ENCODE measurements at regions of chr19 and their contacts with region 1.

Region 1: GRCh38 chr19:52853880-52854279 is 3.5 kb downstream of the ZNF468 start:
- DNase-seq: no peak
- ATAC-seq: no peak
- H3K4me3 Mint-ChIP-seq: no peak overlapping the region
- H3K27ac Mint-ChIP-seq: no peak overlapping the region
- H3K4me1 Mint-ChIP-seq: peaks cover 23% of the 10 kb centered on the region
- H3K27me3 Mint-ChIP-seq: no peaks in the 10 kb centered on the region

Region 2: GRCh38 chr19:52786457-52787359 is 67.2 kb before region 1 on chr19 and contains the start of gene ZNF600:
- CTCF ChIA-PET with region 1: no interaction called
- POLR2A ChIA-PET with region 1: no interaction called
- intact Hi-C with region 1: loop called in 1 of 2 experiments (anchors 1 kb)
- DNase-seq: peak; percentile 83
- ATAC-seq: peak; percentile 99
- H3K4me3 Mint-ChIP-seq: peak within 1 kb of the TSS; percentile 87
- H3K27ac Mint-ChIP-seq: peak within 1 kb of the TSS; percentile 84
- H3K4me1 Mint-ChIP-seq: peaks cover 23% of the 10 kb centered on the region
- H3K27me3 Mint-ChIP-seq: no peaks in the 10 kb centered on the region
- total RNA-seq, gene ZNF600: 10.6 to 14.3 TPM

Region 3: GRCh38 chr19:52823676-52824075 is 30.2 kb before region 1 on chr19:
- CTCF ChIA-PET with region 1: no interaction called
- POLR2A ChIA-PET with region 1: interaction called, 4 read pairs
- intact Hi-C with region 1: loop called in 1 of 2 experiments (anchors 1 kb)
- DNase-seq: no peak
- ATAC-seq: no peak
- H3K4me3 Mint-ChIP-seq: no peak overlapping the region
- H3K27ac Mint-ChIP-seq: no peak overlapping the region
- H3K4me1 Mint-ChIP-seq: peaks cover 9% of the 10 kb centered on the region
- H3K27me3 Mint-ChIP-seq: no peaks in the 10 kb centered on the region

Region 4: DNA sequence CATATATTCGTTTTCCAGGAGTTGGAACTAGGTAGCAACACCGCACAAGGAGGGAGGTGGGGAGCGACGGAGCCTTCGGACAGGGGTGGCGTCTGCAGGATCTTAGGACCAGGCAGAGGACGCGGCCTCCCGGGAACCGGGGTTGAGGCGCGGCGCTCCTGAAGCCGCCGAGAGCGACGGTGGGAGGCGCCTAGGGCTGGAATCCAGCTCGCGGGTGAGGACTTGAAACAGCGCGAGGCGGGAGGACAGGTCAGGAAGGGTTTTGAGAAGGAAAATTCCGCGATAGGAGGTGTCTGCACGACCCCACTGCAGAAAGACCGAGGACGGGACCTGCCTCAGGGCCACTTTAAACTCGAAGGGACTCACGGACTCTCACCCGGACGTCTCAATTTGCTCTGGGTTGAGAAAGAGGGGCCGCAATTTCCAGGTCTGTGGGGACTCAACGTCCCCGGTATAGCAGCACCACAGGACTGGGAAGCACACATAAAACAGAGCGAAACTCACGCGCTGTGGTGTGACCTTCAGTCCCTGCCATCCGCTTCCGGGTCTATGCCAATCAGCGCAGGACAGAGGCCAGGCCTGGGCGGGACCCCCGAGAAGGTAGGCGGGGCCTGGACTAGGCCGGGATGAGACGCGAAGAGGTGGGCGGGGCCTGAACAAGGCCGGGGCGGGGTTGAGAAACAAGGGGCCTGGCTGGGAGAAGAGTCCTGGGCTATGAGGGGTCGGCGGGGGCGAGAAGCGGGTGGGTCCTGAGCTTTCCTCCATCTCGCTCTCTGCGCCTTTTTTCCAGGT is 43.5 kb after region 1 on chr19 and contains the start of gene ZNF320:
- CTCF ChIA-PET with region 1: no interaction called
- POLR2A ChIA-PET with region 1: interaction called, 3 read pairs
- intact Hi-C with region 1: loop called in 1 of 2 experiments (anchors 1 kb)
- DNase-seq: peak; percentile 98
- ATAC-seq: peak; percentile 100
- H3K4me3 Mint-ChIP-seq: peak within 1 kb of the TSS; percentile 88
- H3K27ac Mint-ChIP-seq: peak within 1 kb of the TSS; percentile 93
- H3K4me1 Mint-ChIP-seq: peaks cover 31% of the 10 kb centered on the region
- H3K27me3 Mint-ChIP-seq: no peaks in the 10 kb centered on the region
- total RNA-seq, gene ZNF320: 10.8 to 12.2 TPM